ENCODE measurements at regions of chr6 and their contacts with region 1.

Region 1: DNA sequence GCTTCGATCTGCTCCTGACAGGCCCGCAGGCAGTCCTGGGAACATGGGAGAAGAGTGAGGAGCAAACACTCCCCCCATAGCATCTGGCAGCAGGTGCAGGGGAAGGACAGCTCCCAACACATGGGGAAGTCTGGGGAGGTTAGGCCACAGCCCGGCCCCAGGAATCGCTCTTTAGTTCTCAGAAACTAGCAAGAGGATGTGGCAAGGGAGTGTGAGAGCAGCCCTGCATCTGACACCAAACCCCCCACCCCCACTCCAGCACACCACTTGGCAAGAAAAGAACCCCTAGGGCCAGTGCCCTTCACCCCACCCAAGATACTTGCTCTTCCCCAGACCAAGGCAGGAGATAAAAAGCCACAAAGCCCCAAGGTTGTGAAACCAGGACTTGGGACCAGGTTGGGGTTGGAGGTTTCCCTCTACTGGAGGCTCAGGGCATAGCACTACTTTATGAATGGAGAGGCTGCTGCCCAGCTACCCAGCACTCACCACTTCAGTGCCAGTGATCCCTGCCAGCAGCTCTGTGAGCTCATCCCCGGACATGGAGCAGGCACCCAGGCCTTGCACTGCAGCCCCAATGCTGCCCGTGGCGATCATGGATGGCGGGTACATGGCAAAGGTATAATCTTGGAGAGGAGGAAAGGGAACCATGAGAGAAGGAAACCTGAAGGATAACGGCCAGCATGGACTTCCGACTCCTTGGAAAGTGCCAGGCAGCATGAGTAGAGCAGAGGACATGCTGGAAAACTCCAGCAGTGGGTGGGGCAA is 5.4 kb downstream of the CCND3 start:
- DNase-seq: peak in 8 of 9 donors; percentile 52 to 72 (median 63)
- ATAC-seq: peak; percentile 79
- H3K4me3 ChIP-seq: peak overlapping the region; percentile 34
- H3K4me3 Mint-ChIP-seq: peak overlapping the region; percentile 64 to 100 (median 90)
- H3K27ac ChIP-seq: peak overlapping the region; percentile 76
- H3K27ac Mint-ChIP-seq: peak overlapping the region; percentile 85 to 95 (median 90)
- H3K4me1 ChIP-seq: peaks cover 57 to 61% of the 10 kb centered on the region in 2 donors
- H3K4me1 Mint-ChIP-seq: peaks cover 48 to 81% (median 74%) of the 10 kb centered on the region in 7 donors
- H3K27me3 ChIP-seq: no peaks in the 10 kb centered on the region
- H3K27me3 Mint-ChIP-seq: no peaks in the 10 kb centered on the region

Region 2: GRCh38 chr6:41846666-41847237 is 89.5 kb before region 1 on chr6:
- CTCF ChIA-PET with region 1: interaction called, 6 read pairs
- POLR2A ChIA-PET with region 1: no interaction called
- intact Hi-C with region 1: loop called in 1 of 2 experiments (anchors 1 kb)
- DNase-seq: peak; percentile 8 to 63 (median 54)
- ATAC-seq: peak; percentile 80
- H3K4me3 ChIP-seq: no peak overlapping the region
- H3K4me3 Mint-ChIP-seq: no peak overlapping the region
- H3K27ac ChIP-seq: no peak overlapping the region
- H3K27ac Mint-ChIP-seq: peak overlapping the region in 4 of 9 donors; percentile 4 to 68 (median 32)
- H3K4me1 ChIP-seq: no peaks in the 10 kb centered on the region
- H3K4me1 Mint-ChIP-seq: peaks cover 4 to 13% (median 6%) of the 10 kb centered on the region in 7 donors
- H3K27me3 ChIP-seq: no peaks in the 10 kb centered on the region
- H3K27me3 Mint-ChIP-seq: no peaks in the 10 kb centered on the region

Region 3: DNA sequence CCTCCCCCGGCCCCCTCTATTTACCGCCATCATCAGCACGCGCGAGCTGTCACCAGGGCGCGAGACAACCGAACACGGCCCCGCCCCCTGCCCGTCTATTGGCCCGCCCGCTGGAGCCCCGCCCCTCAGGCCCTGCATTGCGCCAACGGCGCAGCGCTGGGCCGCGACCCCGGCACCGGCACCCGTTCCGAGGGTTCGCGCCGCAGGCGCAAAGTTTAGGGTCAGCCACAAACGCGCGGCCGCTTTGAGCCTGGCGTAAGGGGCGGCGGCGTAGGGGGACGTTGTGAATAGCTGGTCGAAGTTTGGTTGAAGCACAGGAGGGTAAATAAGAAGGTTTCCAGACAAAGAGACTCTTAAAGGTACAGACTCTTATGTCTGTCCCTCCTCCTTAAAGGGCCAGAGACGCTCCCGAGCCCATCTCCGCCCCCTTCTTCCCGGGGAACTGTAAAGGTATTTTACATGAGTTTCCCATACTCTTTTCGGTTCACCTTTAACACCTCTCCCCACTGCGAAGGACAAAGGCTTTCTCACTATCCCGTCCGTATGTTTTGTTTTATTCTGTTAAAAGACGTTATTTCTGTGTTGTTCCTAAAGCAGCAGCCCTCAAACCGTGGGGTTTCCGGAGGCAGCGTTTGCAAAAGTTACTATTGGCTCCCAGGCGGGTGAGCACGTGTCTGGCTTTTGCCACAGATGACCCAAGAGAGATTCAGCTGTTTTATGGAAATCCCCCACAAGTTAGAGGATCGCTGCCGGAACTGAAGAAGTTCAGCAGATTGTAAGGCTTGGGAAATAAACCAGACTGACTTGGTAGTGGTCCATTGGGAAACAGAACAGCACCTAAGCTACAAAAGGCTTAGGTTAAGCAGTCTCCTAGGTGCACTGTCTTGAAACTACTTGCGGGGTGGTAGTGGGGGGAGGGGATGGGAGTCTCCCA is 40.7 kb before region 1 on chr6 and contains the start of gene USP49:
- CTCF ChIA-PET with region 1: no interaction called
- POLR2A ChIA-PET with region 1: interaction called, 3 read pairs
- intact Hi-C with region 1: loop called (anchors 1 to 2 kb)
- DNase-seq: peak; percentile 83 to 92 (median 90)
- ATAC-seq: peak; percentile 97
- H3K4me3 ChIP-seq: peak within 1 kb of the TSS; percentile 69
- H3K4me3 Mint-ChIP-seq: peak within 1 kb of the TSS in 1 of 10 donors; percentile 94
- H3K27ac ChIP-seq: peak within 1 kb of the TSS; percentile 76
- H3K27ac Mint-ChIP-seq: peak within 1 kb of the TSS in 7 of 9 donors; percentile 78 to 97 (median 93)
- H3K4me1 ChIP-seq: peaks cover 14 to 26% of the 10 kb centered on the region in 2 donors
- H3K4me1 Mint-ChIP-seq: peaks cover 5 to 17% (median 11%) of the 10 kb centered on the region in 7 donors
- H3K27me3 ChIP-seq: no peaks in the 10 kb centered on the region
- H3K27me3 Mint-ChIP-seq: peaks cover 0 to 7% (median 0%) of the 10 kb centered on the region in 5 donors
- total RNA-seq, gene USP49: 1.8 to 6.0 (median 3.1) TPM

Region 4: DNA sequence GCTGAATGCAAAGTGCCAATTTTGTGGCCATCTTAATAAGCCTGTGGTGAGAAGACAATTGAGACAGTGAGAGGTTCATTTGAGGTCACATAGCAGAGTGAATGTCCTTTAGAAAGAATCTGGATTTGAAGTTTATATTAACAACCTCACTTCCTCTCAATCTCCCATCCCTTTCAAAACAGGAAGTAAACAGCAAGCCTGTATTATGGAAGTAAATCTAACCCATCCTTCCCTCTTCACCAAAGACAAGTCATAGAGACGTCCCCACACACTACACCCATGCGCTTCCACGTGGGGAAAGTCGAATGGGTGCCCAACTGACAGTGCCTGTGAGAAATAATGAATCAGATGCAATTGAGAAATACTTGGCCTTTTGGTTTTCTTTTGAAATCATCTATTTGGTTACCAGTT is 34.2 kb after region 1 on chr6:
- CTCF ChIA-PET with region 1: no interaction called
- POLR2A ChIA-PET with region 1: interaction called, 4 read pairs
- intact Hi-C with region 1: loop called (anchors 5 kb)
- DNase-seq: peak in 1 of 9 donors; percentile 44
- ATAC-seq: peak; percentile 93
- H3K4me3 ChIP-seq: no peak overlapping the region
- H3K4me3 Mint-ChIP-seq: peak overlapping the region; percentile 38 to 81 (median 61)
- H3K27ac ChIP-seq: peak overlapping the region; percentile 38
- H3K27ac Mint-ChIP-seq: peak overlapping the region; percentile 61 to 94 (median 76)
- H3K4me1 ChIP-seq: peaks cover 11 to 53% of the 10 kb centered on the region in 2 donors
- H3K4me1 Mint-ChIP-seq: peaks cover 35 to 98% (median 77%) of the 10 kb centered on the region in 7 donors
- H3K27me3 ChIP-seq: no peaks in the 10 kb centered on the region
- H3K27me3 Mint-ChIP-seq: no peaks in the 10 kb centered on the region

Region 5: DNA sequence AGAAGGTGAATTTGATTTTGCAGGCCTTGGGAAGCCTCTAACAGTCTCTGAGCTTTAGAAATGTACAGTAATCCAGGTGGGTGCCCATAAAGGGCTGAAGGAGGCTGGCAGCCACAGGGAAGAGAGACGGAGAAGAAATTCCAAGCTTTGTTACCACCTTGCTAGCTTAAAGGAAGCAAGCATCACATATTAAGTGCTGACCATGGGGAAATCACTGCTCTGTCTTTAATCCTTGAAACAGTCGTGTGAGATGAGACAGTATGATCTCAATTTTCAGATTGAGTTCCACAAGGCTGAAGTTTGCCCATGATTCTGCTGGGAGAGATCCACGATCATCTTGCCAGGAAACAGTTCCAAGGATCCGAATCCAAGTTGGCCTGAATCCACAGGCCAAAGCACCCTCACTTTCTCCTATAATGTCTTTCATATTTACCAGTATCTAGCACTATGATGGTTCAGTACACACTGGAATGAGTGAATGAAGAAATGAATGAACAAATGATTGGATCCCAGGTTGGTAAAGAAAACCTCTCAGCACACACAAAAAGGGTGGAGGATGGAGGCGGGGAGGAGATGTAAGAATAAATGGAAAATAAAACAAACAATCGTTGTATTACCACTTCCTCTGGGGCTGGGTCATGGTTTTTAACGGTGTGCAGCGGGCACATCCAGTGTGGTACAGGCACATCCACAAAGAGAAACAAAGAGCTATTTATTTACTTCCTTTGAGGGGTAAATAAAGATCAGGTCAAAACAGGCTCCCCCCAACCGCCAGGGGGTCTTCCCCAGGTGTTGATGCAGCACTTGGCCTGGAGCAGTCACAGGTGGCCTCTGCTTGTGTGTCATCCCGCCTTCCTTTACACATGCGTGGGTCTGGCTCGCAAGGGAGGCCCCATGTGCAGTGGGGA is 85.8 kb after region 1 on chr6:
- CTCF ChIA-PET with region 1: interaction called, 3 read pairs
- POLR2A ChIA-PET with region 1: interaction called, 3 read pairs
- intact Hi-C with region 1: loop called (anchors 1 to 5 kb)
- DNase-seq: peak in 8 of 9 donors; percentile 64 to 86 (median 77)
- ATAC-seq: peak; percentile 85
- H3K4me3 ChIP-seq: peak overlapping the region; percentile 23
- H3K4me3 Mint-ChIP-seq: peak overlapping the region; percentile 73 to 91 (median 80)
- H3K27ac ChIP-seq: peak overlapping the region; percentile 62
- H3K27ac Mint-ChIP-seq: peak overlapping the region; percentile 87 to 98 (median 95)
- H3K4me1 ChIP-seq: peaks cover 69 to 72% of the 10 kb centered on the region in 2 donors
- H3K4me1 Mint-ChIP-seq: peaks cover 59 to 94% (median 78%) of the 10 kb centered on the region in 7 donors
- H3K27me3 ChIP-seq: no peaks in the 10 kb centered on the region
- H3K27me3 Mint-ChIP-seq: no peaks in the 10 kb centered on the region

Region 6: DNA sequence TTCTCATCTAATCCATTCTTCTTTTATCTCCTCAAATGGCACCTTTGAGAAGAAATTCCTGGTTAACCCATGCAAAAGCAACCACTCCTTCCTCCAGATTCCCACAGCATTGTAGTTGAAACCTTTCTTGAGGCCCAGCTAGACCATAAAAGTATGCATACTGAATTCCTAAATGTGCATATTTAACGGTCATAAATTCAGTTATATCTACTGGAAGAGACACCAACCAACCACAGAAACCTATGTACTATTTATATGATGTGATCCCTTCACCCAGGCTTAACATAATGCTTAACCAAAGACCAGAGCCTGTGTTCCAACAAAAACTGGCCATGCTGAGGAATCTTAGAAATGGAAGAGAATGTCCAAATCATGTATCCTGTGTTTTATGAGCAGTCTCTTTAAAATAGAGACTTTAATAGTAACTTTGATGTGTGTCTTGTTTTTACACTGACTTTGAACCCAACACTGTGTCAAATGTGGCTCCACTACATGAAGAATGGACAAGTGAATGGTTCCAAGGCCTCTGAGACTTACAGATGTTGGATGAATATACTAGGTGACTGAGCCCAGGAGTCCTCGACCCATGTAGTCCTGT is 102.7 kb after region 1 on chr6:
- CTCF ChIA-PET with region 1: interaction called, 32 read pairs
- POLR2A ChIA-PET with region 1: interaction called, 180 read pairs
- intact Hi-C with region 1: loop called (anchors 1 kb)
- DNase-seq: no peak
- ATAC-seq: no peak
- H3K4me3 ChIP-seq: peak overlapping the region; percentile 61
- H3K4me3 Mint-ChIP-seq: peak overlapping the region; percentile 84 to 99 (median 95)
- H3K27ac ChIP-seq: peak overlapping the region; percentile 76
- H3K27ac Mint-ChIP-seq: peak overlapping the region; percentile 63 to 98 (median 94)
- H3K4me1 ChIP-seq: peaks cover 75 to 81% of the 10 kb centered on the region in 2 donors
- H3K4me1 Mint-ChIP-seq: peaks cover 43 to 85% (median 71%) of the 10 kb centered on the region in 7 donors
- H3K27me3 ChIP-seq: no peaks in the 10 kb centered on the region
- H3K27me3 Mint-ChIP-seq: no peaks in the 10 kb centered on the region

Region 7: DNA sequence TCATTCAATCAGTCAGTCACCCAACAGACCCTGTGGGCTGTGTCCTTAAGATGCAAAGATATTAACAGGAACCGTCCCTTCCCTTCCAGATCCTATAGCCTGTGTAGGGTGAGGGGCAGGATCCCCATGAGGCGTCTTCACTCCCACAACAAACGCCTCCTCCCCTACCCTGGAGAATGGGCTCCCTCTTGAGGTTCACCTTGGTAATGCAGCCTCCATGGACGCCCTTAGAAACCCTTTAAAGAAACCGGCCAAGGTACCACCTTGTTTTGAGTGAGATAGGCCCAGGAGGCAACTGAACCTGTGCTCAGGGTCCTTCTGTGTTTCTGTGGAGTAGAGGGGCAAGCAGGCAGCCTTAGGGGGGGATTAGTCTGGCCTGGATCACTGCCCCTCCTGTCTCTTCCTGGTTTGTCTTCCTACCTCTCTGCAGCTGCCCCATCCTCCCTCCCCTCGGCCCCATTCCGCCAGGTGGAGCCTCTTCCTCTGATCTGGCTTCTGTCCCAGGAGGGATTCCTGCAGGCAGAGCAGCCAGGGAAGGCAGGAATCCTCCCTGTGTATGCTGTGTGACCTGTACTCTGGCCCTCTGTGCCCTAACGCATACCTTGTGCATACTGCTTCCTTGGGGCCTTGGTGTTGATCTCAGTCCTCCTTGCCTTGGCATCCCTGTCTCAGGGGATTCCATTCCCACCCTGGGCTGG is 230.3 kb after region 1 on chr6:
- CTCF ChIA-PET with region 1: no interaction called
- POLR2A ChIA-PET with region 1: no interaction called
- intact Hi-C with region 1: loop called in 1 of 2 experiments (anchors 1 kb)
- DNase-seq: peak; percentile 48 to 83 (median 71)
- ATAC-seq: peak; percentile 95
- H3K4me3 ChIP-seq: no peak overlapping the region
- H3K4me3 Mint-ChIP-seq: no peak overlapping the region
- H3K27ac ChIP-seq: no peak overlapping the region
- H3K27ac Mint-ChIP-seq: peak overlapping the region in 2 of 9 donors; percentile 10 to 51
- H3K4me1 ChIP-seq: no peaks in the 10 kb centered on the region
- H3K4me1 Mint-ChIP-seq: peaks cover 0 to 10% (median 5%) of the 10 kb centered on the region in 7 donors
- H3K27me3 ChIP-seq: no peaks in the 10 kb centered on the region
- H3K27me3 Mint-ChIP-seq: peaks cover 0 to 6% (median 3%) of the 10 kb centered on the region in 5 donors